ENCODE measurements at regions of chr6 and their contacts with region 1.

Region 1: GRCh38 chr6:144219056-144219685 is 66.0 kb upstream of the UTRN start:
- DNase-seq: no peak
- ATAC-seq: no peak
- H3K4me3 Mint-ChIP-seq: no peak overlapping the region
- H3K27ac Mint-ChIP-seq: no peak overlapping the region
- H3K4me1 Mint-ChIP-seq: peaks cover 24% of the 10 kb centered on the region
- H3K27me3 Mint-ChIP-seq: peaks cover 4% of the 10 kb centered on the region; the same call in 1 of the 2 replicates
- CTCF ChIP-seq: no peak; the same call in 1 of the 2 replicates

Region 2: DNA sequence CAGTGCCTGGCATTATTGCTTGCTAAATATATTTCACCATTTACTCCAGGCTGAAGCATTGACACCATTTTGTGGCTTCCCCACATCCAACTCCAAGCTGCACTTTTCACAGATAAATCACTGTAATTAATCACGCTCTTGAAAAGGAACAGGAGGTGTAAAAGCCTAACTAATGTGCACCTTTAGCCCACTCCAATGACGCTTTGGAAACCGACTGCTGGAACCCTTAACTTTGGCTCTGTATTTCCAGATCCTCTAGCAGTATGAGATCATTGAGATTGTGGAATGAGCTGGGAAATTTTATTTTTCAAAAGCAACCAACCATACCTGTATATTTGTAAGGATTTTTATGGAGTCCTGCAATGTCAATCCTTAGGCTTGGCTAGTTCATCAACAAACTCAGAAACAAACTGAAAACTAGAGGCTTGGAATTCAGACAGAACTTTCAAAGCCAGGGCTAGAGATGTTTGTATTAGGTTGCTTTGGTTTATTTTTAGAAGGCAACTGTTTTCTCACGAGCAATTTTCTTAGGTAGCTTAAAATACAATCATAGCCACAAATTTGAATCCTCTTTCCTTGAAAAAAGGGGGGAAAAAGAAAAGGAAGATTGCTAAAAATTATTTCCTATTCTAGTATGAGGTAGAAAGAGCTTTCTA is 13.1 kb after region 1 on chr6:
- CTCF ChIA-PET with region 1: interaction called, 12 read pairs
- POLR2A ChIA-PET with region 1: interaction called, 3 read pairs
- DNase-seq: no peak
- ATAC-seq: no peak
- H3K4me3 Mint-ChIP-seq: no peak overlapping the region
- H3K27ac Mint-ChIP-seq: no peak overlapping the region
- H3K4me1 Mint-ChIP-seq: peaks cover 33% of the 10 kb centered on the region
- H3K27me3 Mint-ChIP-seq: no peaks in the 10 kb centered on the region; the same call in 1 of the 2 replicates
- CTCF ChIP-seq: no peak